Naive thymus-derived CD4-positive, alpha-beta T cell (primary cell): ENCODE measurements at regions of chr2 and their contacts with region 1.

Region 1: GRCh38 chr2:131093006-131093695 is at the start of gene FAM168B:
- DNase-seq: peak; percentile 82 to 96 (median 92)
- ATAC-seq: peak; percentile 92
- H3K4me3 ChIP-seq: peak within 1 kb of the TSS; percentile 81
- H3K4me3 Mint-ChIP-seq: peak within 1 kb of the TSS; percentile 82 to 98 (median 94)
- H3K27ac ChIP-seq: peak within 1 kb of the TSS; percentile 99
- H3K27ac Mint-ChIP-seq: peak within 1 kb of the TSS; percentile 88 to 97 (median 96)
- H3K4me1 ChIP-seq: peaks cover 0 to 12% of the 10 kb centered on the region in 2 donors
- H3K4me1 Mint-ChIP-seq: peaks cover 7 to 37% (median 24%) of the 10 kb centered on the region in 7 donors
- H3K27me3 ChIP-seq: no peaks in the 10 kb centered on the region
- H3K27me3 Mint-ChIP-seq: no peaks in the 10 kb centered on the region
- total RNA-seq, gene FAM168B: 50.5 to 82.9 (median 66.7) TPM

Region 2: DNA sequence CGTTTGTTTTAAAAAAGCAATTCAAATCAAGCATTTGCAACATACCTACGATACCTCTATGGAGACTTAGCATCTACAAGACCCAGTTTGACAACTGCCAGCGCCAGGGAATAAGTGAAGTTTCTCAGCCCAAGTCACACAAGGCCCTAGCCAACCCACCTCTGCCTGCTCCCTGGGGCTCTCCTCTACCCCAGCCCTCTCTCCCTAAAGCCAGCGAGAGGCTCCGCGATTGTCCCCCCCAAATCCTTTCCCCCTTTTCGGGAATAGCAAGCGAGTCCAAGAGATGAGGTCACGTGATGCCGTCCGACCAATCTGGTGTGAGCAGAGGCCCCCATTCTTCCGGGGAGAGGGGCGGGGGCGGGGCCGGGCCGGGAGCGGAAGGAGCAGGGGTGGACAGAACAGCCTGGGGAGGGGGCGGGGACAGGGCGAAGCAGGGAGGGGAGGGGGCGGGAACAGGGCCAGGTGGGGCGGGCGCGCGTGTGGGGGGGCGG is 1215.8 kb before region 1 on chr2:
- CTCF ChIA-PET with region 1: no interaction called
- POLR2A ChIA-PET with region 1: no interaction called
- intact Hi-C with region 1: loop called in 1 of 2 experiments (anchors 5 kb)
- DNase-seq: peak; percentile 61 to 82 (median 78)
- ATAC-seq: peak; percentile 95
- H3K4me3 ChIP-seq: peak overlapping the region; percentile 96
- H3K4me3 Mint-ChIP-seq: peak overlapping the region; percentile 86 to 99 (median 96)
- H3K27ac ChIP-seq: peak overlapping the region; percentile 78
- H3K27ac Mint-ChIP-seq: peak overlapping the region; percentile 77 to 97 (median 92)
- H3K4me1 ChIP-seq: peaks cover 5 to 7% of the 10 kb centered on the region in 2 donors
- H3K4me1 Mint-ChIP-seq: peaks cover 6 to 18% (median 13%) of the 10 kb centered on the region in 7 donors
- H3K27me3 ChIP-seq: no peaks in the 10 kb centered on the region
- H3K27me3 Mint-ChIP-seq: peaks cover 0 to 2% (median 0%) of the 10 kb centered on the region in 5 donors

Region 3: DNA sequence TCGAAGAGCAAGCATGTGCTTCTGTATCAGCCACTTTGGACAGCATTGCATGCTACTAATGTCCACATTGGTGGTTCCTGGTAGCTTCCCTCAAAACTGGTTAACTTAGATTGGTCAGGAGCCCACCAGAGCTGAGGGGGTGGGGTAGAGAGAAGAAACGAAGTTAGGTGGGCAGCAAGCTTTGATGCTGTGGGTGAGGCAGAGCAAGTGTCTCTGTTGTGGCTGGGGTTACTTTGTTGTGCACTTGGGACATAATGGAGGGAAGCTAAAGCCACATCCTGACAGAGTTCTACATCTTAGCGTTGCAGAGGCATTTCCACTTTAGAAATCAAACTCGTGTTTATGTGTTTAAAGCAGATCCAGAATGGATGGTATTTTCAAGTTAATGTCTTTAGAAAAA is 82.6 kb before region 1 on chr2:
- CTCF ChIA-PET with region 1: no interaction called
- POLR2A ChIA-PET with region 1: no interaction called
- intact Hi-C with region 1: no loop called
- DNase-seq: peak in 3 of 9 donors; percentile 9 to 25 (median 12)
- ATAC-seq: no peak
- H3K4me3 ChIP-seq: peak overlapping the region; percentile 24
- H3K4me3 Mint-ChIP-seq: peak overlapping the region in 8 of 10 donors; percentile 22 to 68 (median 32)
- H3K27ac ChIP-seq: no peak overlapping the region
- H3K27ac Mint-ChIP-seq: peak overlapping the region in 5 of 9 donors; percentile 8 to 67 (median 34)
- H3K4me1 ChIP-seq: peaks cover 8 to 13% of the 10 kb centered on the region in 2 donors
- H3K4me1 Mint-ChIP-seq: peaks cover 15 to 31% (median 27%) of the 10 kb centered on the region in 7 donors
- H3K27me3 ChIP-seq: no peaks in the 10 kb centered on the region
- H3K27me3 Mint-ChIP-seq: peaks cover 0 to 49% (median 15%) of the 10 kb centered on the region in 5 donors

Region 4: DNA sequence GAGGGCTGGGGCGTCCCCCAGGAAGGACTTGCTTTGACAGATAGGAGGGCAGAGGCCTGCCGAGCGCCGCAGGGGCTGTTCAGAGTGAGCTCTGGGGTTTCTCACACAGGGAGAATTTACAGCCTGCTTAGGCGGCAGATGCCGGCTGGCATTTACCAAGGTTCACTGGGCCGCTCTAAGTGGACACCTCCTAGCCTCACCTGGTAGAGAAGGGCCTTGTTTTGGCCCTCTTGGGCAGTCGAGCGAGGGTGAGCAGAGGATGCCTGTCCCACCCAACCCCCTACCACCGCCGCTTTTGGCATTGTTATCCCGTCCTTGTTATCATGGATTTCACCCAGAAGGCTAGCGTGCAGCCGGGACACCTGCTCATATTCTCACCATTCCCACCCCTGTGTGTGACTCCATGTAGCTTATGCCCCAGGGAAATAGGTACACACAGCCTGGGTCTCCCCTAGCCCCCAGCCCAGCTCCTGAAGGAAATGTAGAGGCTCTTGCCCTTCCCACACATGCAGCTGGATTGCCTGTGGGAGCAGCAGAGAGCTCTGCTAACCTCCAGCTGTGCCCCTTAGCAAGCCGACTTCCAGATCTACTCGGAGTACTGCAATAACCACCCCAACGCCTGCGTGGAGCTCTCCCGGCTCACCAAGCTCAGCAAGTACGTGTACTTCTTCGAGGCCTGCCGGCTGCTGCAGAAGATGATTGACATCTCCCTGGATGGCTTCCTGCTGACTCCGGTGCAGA is 52.3 kb before region 1 on chr2:
- CTCF ChIA-PET with region 1: interaction called, 4 read pairs
- POLR2A ChIA-PET with region 1: interaction called, 15 read pairs
- intact Hi-C with region 1: loop called in 1 of 2 experiments (anchors 2 kb)
- DNase-seq: peak in 3 of 9 donors; percentile 17 to 28 (median 20)
- ATAC-seq: no peak
- H3K4me3 ChIP-seq: peak overlapping the region; percentile 63
- H3K4me3 Mint-ChIP-seq: peak overlapping the region; percentile 67 to 92 (median 84)
- H3K27ac ChIP-seq: peak overlapping the region; percentile 42
- H3K27ac Mint-ChIP-seq: peak overlapping the region; percentile 18 to 93 (median 79)
- H3K4me1 ChIP-seq: peaks cover 19 to 23% of the 10 kb centered on the region in 2 donors
- H3K4me1 Mint-ChIP-seq: peaks cover 7 to 42% (median 26%) of the 10 kb centered on the region in 7 donors
- H3K27me3 ChIP-seq: no peaks in the 10 kb centered on the region
- H3K27me3 Mint-ChIP-seq: peaks cover 0 to 31% (median 0%) of the 10 kb centered on the region in 5 donors

Region 5: GRCh38 chr2:131535526-131535925 is 442.4 kb after region 1 on chr2:
- CTCF ChIA-PET with region 1: no interaction called
- POLR2A ChIA-PET with region 1: no interaction called
- intact Hi-C with region 1: no loop called
- DNase-seq: no peak
- ATAC-seq: no peak
- H3K4me3 ChIP-seq: no peak overlapping the region
- H3K4me3 Mint-ChIP-seq: no peak overlapping the region
- H3K27ac ChIP-seq: no peak overlapping the region
- H3K27ac Mint-ChIP-seq: no peak overlapping the region
- H3K4me1 ChIP-seq: no peaks in the 10 kb centered on the region
- H3K4me1 Mint-ChIP-seq: peaks cover 0 to 2% (median 0%) of the 10 kb centered on the region in 7 donors
- H3K27me3 ChIP-seq: no peaks in the 10 kb centered on the region
- H3K27me3 Mint-ChIP-seq: peaks cover 0 to 6% (median 0%) of the 10 kb centered on the region in 5 donors